ENCODE measurements at regions of chr7 and their contacts with region 1.

Region 1: DNA sequence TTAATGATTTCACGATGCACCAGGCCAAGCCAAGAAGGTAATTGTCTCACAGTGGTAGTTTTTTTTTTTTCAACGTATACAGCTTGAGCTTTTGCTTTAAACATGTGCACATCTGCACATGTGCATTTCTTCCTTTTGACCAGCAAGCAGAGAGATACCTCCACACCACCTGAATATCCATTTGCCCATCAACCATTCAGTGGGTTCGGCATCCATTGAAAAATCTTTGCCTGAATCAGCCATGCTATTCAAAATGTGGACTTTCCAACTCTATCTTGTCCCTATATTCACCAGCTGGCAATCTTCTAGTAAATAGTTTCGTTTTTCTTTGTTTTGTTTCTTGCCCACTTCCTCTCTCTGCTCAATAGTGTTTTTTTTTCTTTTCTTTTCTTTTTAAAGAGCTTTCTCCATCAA is 7.7 kb upstream of the TRA2A start:
- DNase-seq: peak; percentile 62
- ATAC-seq: peak; percentile 80
- H3K4me3 ChIP-seq: no peak overlapping the region
- H3K27ac ChIP-seq: peak overlapping the region; percentile 79
- H3K4me1 ChIP-seq: peaks cover 15% of the 10 kb centered on the region
- H3K27me3 ChIP-seq: no peaks in the 10 kb centered on the region
- CTCF ChIP-seq: no peak
- EP300 ChIP-seq: no peak
- POLR2A ChIP-seq: no peak
- RAD21 ChIP-seq: no peak

Region 2: DNA sequence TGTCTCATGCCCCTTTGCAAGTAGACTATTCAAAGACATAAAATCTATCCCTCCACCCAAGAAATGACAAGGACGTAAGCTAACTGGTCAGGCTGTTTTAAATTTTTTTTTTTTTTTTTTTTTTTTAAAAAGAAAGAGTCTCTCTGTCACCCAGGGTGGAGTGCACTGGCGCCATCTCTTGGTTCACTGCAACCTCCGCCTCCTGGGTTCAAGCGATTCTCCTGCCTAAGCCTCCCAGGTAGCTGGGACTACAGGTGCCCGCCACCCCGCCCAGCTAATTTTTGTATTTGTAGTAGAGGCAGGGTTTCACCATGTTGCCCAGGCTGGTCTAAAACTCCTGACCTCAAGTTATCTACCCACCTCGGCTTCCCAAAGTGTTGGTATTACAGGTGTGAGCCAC is 18.9 kb before region 1 on chr7:
- CTCF ChIA-PET with region 1: interaction called, 27 read pairs
- POLR2A ChIA-PET with region 1: interaction called, 8 read pairs
- RAD21 ChIA-PET with region 1: interaction called, 5 read pairs
- SMC1A ChIA-PET with region 1: interaction called, 13 read pairs
- in situ Hi-C with region 1: no loop called
- intact Hi-C with region 1: no loop called
- DNase-seq: no peak
- ATAC-seq: no peak
- H3K4me3 ChIP-seq: no peak overlapping the region
- H3K27ac ChIP-seq: no peak overlapping the region
- H3K4me1 ChIP-seq: peaks cover 5% of the 10 kb centered on the region
- H3K27me3 ChIP-seq: no peaks in the 10 kb centered on the region
- CTCF ChIP-seq: no peak
- EP300 ChIP-seq: no peak
- POLR2A ChIP-seq: no peak
- RAD21 ChIP-seq: 0 out of 2 replicates have a peak, but pooled peaks have one; percentile 12